ENCODE measurements at regions of chr5 and their contacts with region 1.

Region 1: DNA sequence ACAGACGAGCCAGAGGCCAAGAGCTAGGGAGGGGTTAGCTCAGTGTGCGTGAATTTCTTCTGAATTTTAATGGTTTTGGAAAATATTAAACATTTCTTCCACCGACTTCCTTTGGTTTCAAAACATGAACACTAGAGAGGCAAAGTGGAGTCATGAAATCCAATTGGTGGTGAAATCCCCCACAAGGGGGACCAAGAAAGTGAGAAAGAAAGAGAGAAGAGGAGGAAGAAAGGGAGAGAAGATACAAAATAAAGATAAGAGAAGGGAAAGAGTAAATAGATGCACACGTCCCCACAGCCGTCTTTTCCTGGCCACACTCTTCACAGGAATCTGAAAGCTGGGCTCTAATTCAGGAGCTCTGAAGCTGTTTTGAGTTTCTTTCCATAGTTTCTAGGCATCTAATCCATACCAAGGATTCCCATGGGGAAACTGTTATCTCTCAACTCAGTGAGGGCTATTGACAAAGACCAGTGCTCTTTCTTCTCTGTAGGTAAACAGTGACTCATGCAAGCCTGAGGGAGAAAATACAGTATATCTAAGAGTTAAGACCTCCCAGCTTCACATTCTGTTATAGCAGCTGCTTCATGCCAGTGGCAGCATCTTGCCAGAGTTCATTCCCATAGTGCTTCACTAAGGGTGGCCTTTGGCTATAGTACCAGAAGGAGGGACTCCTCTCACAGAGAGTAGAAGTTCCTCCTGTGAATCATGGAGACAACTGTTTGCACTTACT is 115.8 kb upstream of the LIFR start:
- DNase-seq: no peak

Region 2: GRCh38 chr5:38441453-38442246 is 230.6 kb before region 1 on chr5:
- intact Hi-C with region 1: loop called (anchors 10 kb)
- DNase-seq: peak; percentile 74 to 98 (median 93)

Region 3: GRCh38 chr5:38776149-38776896 is 104.1 kb after region 1 on chr5:
- intact Hi-C with region 1: no loop called
- DNase-seq: no peak

Measured in head of caudate nucleus (tissue), 42 donors.